ENCODE measurements at regions of chr2 and their contacts with region 1.

Region 1: DNA sequence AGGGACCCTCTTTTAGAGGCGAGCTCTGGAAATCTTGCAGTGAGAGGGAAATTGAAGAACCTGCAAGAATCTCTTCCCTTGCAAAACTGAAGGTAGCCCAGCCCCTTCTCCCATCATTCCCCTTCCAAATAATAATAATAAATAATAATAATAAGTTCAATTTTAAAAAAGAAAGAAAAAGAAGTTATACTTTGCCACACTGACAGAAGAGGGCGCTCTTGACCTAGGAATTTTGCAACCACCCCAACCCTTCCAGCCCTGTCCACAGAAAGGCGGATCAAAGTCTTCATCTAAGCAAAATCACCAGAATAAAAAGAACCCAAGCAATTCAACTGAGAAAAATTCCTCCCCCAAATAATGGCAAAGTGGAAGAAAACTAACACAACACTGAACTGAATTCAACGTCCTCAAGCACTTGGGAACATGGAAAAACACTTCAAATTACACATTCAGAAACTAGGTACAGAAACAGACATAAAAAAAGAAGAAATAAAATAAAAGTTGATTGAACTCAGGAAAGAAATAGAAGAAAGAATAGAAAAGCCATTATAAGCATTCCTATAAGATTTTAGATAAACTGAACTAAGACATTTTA is 98.9 kb upstream of the GLS start:
- DNase-seq: peak; percentile 65
- ATAC-seq: peak; percentile 90; the same call in 2 of the 3 replicates
- H3K4me3 ChIP-seq: no peak overlapping the region
- H3K27ac ChIP-seq: no peak overlapping the region
- H3K4me1 ChIP-seq: peaks cover 12% of the 10 kb centered on the region; the same call in 1 of the 2 replicates
- H3K27me3 ChIP-seq: no peaks in the 10 kb centered on the region
- CTCF ChIP-seq: peak; percentile 70
- EP300 ChIP-seq: no peak
- POLR2A ChIP-seq: no peak
- RAD21 ChIP-seq: peak; percentile 80

Region 2: DNA sequence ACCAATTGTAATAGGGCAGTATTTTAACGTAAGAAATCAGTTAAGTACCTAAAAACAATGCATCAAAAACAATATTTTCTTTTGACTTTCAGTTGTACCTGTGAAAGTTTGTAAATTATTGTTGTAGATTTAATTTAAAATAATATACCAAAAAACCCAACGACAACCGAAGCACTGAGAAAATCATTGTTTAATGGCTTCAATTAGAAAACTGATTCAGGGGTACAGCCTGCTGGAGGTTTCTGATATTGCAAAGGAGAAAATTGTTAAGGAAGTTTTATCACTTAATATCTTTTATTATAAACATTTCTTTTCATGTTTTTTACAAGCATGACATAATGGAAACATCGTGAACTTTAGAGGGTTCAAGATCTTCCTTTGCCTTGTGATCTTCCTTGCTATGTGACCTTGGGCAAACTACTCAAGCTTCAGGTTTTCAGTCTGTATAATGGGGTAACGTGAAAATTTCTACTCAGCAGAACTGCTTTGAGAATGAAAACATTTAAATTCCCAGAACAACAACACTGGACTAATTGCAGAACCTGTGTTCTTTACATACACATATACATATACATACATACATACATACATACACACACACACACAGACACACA is 22.6 kb after region 1 on chr2:
- CTCF ChIA-PET with region 1: interaction called, 12 read pairs
- POLR2A ChIA-PET with region 1: no interaction called
- in situ Hi-C with region 1: no loop called
- intact Hi-C with region 1: loop called (anchors 1 kb)
- DNase-seq: no peak
- ATAC-seq: no peak
- H3K4me3 ChIP-seq: no peak overlapping the region
- H3K27ac ChIP-seq: no peak overlapping the region
- H3K4me1 ChIP-seq: peaks cover 53% of the 10 kb centered on the region
- H3K27me3 ChIP-seq: no peaks in the 10 kb centered on the region
- CTCF ChIP-seq: peak; percentile 26; the same call in 1 of the 2 replicates
- EP300 ChIP-seq: no peak
- POLR2A ChIP-seq: no peak
- RAD21 ChIP-seq: no peak

Region 3: GRCh38 chr2:190853531-190854383 is 72.1 kb after region 1 on chr2:
- CTCF ChIA-PET with region 1: interaction called, 22 read pairs
- POLR2A ChIA-PET with region 1: no interaction called
- in situ Hi-C with region 1: loop called (anchors 5 kb)
- intact Hi-C with region 1: loop called (anchors 2 kb)
- DNase-seq: no peak
- ATAC-seq: no peak
- H3K4me3 ChIP-seq: no peak overlapping the region
- H3K27ac ChIP-seq: no peak overlapping the region
- H3K4me1 ChIP-seq: peaks cover 24% of the 10 kb centered on the region
- H3K27me3 ChIP-seq: no peaks in the 10 kb centered on the region
- CTCF ChIP-seq: no peak
- EP300 ChIP-seq: no peak
- POLR2A ChIP-seq: no peak
- RAD21 ChIP-seq: no peak

Region 4: GRCh38 chr2:190880378-190881073 is 98.8 kb after region 1 on chr2 and contains the start of gene GLS:
- CTCF ChIA-PET with region 1: no interaction called
- POLR2A ChIA-PET with region 1: interaction called, 3 read pairs
- in situ Hi-C with region 1: no loop called
- intact Hi-C with region 1: loop called (anchors 1 kb)
- DNase-seq: peak; percentile 97
- ATAC-seq: peak; percentile 91
- H3K4me3 ChIP-seq: peak within 1 kb of the TSS; percentile 85 to 97 (median 86)
- H3K27ac ChIP-seq: peak within 1 kb of the TSS; percentile 81
- H3K4me1 ChIP-seq: peaks cover 42% of the 10 kb centered on the region
- H3K27me3 ChIP-seq: no peaks in the 10 kb centered on the region; a peak in 1 of 5 replicates
- CTCF ChIP-seq: no peak
- EP300 ChIP-seq: no peak
- POLR2A ChIP-seq: peak; percentile 99 to 100
- RAD21 ChIP-seq: peak; percentile 18
- total RNA-seq, gene GLS: 183 and 212 TPM in 2 replicates

Region 5: DNA sequence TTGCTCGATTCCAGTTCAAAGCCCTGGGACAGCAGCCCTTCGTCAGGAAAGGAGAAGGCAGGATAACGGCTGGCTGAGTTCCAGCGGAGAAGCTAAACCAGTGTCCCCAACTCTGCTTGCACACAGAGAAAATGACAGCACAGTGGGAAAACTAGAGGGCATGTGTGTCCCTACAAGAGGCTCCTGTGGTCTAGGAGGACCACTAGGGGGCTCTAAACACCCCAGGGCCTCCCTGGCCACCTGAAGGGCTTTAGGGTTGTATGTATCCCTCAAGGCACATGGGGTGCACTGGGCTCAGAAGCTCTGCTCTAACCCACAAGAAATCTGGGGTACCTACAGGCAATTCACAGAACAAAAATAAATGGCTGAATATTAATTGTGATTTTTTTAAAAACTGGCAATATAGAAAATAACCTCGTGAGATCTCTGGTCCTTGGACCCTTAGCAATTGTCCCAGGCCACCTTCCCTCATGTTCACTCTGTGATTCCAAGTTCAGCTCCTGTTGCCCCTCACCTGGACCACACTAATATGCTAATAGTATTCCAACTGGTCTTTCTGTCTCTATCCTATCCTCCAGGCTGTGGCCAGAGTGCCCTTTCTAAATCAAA is 214.7 kb after region 1 on chr2:
- CTCF ChIA-PET with region 1: interaction called, 4 read pairs
- POLR2A ChIA-PET with region 1: no interaction called
- in situ Hi-C with region 1: no loop called
- intact Hi-C with region 1: loop called (anchors 1 kb)
- DNase-seq: peak; percentile 70
- ATAC-seq: peak; percentile 100
- H3K4me3 ChIP-seq: no peak overlapping the region
- H3K27ac ChIP-seq: no peak overlapping the region
- H3K4me1 ChIP-seq: no peaks in the 10 kb centered on the region
- H3K27me3 ChIP-seq: no peaks in the 10 kb centered on the region
- CTCF ChIP-seq: peak; percentile 77
- EP300 ChIP-seq: no peak
- POLR2A ChIP-seq: no peak
- RAD21 ChIP-seq: peak; percentile 72

Region 6: DNA sequence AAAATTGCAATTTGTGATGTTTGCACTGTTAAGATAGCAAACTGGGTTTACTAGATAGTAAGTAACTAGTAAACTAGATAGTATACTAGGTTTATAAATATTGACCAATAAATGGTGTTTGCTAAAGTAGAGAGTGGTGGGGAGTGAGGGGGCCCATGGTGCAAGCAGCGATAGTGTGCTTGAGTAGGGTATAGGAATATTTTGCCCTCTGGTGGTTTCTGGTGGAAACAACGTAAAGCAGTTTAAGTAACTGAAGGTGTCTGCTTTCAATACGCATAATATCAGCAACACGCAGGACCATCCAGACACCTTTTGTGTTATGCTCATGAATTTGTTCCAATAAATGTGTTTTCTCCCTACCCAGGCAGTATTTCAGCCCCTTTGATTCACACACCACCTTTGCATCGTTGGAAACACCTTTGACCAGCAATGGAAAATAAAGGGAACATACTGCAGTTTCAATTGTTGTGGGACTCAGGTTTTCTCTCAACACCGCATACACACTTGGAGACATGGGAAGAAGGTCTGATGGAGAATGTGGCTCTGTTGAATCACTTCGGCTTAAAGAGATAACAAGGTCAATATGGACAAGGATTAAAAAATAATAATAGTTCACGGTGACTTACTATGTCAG is 248.9 kb after region 1 on chr2:
- CTCF ChIA-PET with region 1: interaction called, 4 read pairs
- POLR2A ChIA-PET with region 1: no interaction called
- in situ Hi-C with region 1: loop called (anchors 5 kb)
- intact Hi-C with region 1: loop called (anchors 1 kb)
- DNase-seq: peak; percentile 52
- ATAC-seq: peak; percentile 95
- H3K4me3 ChIP-seq: no peak overlapping the region; a peak in 1 of 6 replicates
- H3K27ac ChIP-seq: no peak overlapping the region
- H3K4me1 ChIP-seq: peaks cover 32% of the 10 kb centered on the region
- H3K27me3 ChIP-seq: no peaks in the 10 kb centered on the region
- CTCF ChIP-seq: peak; percentile 80
- EP300 ChIP-seq: no peak
- POLR2A ChIP-seq: no peak
- RAD21 ChIP-seq: peak; percentile 53; the same call in 1 of the 2 replicates

Measured in HepG2 (cell line).